Prostate gland (tissue), 2 donors: ENCODE measurements at regions of chr5 and their contacts with region 1.

Region 1: DNA sequence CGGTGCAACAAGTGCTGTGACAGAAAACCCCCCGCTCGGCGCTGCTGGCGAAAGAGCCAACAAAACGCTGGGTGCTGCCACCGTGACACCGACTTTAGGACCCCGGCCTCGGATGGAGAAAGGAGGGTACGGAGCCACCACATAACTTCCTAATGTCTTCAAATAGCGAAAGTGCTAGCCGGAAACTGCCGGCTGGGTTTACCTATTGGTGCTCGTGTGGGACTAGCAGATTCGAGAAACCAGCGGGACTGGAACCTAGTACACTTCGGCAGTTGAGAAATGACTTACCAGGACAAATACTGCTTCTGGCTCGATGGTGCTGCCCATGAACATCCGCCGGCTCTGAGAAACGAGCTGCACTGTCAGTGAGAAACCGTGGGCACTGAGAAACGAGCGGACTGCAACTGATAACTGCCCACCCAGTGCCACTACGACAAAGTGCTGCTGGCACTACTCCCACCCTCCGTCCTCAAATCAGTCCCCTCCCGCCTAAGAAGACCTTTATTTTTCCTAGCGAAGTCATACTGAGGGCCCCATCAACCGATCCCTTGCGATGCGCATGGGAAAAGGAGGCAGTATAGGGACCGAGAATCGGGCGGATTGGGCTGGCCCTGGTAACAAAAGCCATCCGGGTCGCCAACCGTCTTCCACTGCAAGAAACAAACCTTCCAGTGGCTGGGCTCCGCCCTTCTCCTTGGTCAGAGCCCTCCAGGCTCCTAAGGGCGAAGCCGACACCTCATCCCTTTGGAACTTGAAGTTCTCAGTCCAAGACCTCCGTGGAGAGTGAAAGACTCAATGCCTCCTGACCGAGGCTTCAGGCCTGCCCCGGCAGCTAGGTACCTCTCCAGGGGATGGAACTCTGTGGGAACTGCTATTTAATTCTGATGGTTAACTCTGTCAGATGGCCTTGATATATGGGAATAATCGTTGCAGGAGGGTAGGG is 27.0 kb upstream of the ANXA2R start:
- DNase-seq: peak; percentile 92
- H3K4me3 ChIP-seq: peak overlapping the region; percentile 62 to 77
- H3K27ac ChIP-seq: peak overlapping the region; percentile 98 to 99
- H3K4me1 ChIP-seq: peaks cover 5% of the 10 kb centered on the region
- H3K27me3 ChIP-seq: no peaks in the 10 kb centered on the region
- CTCF ChIP-seq: peak in 1 of 4 experiments; percentile 12
- POLR2A ChIP-seq: peak; percentile 60

Region 2: DNA sequence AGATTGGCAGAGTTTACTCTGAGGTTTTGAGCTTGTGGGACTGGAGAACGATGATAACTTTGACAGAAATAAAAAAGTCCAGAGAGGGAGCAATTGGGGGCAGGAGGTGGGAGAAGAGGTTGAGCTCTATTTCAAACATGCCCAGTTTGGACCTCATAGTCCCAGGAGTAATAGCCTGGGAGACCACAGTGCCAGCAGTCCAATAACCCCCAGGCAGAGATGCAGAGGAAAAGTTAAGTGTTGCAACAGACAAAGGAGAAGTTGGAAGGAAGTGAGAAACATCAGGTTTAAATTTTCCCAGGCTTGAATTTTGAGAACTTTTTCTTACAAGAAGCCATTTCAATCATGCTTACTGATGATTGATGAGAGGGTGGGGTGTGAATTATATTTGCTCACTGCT is 760.8 kb before region 1 on chr5:
- intact Hi-C with region 1: no loop called
- DNase-seq: no peak
- H3K4me3 ChIP-seq: no peak overlapping the region
- H3K27ac ChIP-seq: no peak overlapping the region
- H3K4me1 ChIP-seq: no peaks in the 10 kb centered on the region
- H3K27me3 ChIP-seq: no peaks in the 10 kb centered on the region
- CTCF ChIP-seq: no peak
- POLR2A ChIP-seq: no peak

Region 3: DNA sequence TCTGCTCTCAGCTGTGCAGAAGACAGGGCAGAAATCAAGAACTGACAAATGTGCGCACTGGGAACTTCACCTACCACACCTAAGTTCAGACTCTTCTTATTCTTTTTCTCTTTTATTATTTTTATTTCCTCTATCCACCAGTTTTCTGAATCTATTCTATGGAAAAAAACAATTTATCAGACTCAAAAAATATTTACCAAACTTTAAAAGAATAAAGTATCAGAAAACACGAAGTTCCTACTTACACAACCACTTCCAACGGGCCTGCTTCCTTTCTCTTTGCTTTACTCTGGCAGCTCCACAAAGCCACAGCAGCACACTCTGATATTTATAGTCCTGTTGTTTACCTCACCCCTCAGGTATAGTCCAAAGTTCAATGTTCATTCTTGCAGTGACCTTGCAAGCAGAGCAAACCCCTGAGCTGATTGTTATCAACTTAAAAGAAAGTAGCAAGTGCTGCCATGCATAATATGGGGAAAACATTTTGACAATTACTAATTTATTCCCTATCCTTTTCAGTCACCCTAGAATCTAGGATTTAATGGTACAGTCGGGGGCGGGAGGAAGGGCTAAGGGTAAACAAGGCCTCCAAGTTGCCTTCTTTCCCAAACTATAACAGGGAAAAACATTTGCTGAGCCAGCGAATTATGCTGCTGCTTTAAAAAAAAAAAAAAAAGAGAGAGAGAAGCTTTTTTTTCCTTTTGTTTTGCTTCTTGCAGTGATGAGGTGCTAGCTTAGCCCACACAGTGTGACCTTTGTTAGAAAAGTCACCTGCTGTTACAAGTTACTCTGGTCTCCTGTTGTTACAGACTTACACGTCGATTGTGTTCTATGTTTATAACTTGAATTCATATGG is 255.3 kb before region 1 on chr5 and contains the start of gene SELENOP:
- intact Hi-C with region 1: no loop called
- DNase-seq: peak; percentile 84
- H3K4me3 ChIP-seq: peak within 1 kb of the TSS; percentile 32 to 40
- H3K27ac ChIP-seq: peak within 1 kb of the TSS; percentile 82 to 83
- H3K4me1 ChIP-seq: peaks cover 10% of the 10 kb centered on the region
- H3K27me3 ChIP-seq: no peaks in the 10 kb centered on the region
- CTCF ChIP-seq: no peak
- POLR2A ChIP-seq: peak; percentile 71
- total RNA-seq, gene SELENOP: 228 to 503 TPM

Region 4: DNA sequence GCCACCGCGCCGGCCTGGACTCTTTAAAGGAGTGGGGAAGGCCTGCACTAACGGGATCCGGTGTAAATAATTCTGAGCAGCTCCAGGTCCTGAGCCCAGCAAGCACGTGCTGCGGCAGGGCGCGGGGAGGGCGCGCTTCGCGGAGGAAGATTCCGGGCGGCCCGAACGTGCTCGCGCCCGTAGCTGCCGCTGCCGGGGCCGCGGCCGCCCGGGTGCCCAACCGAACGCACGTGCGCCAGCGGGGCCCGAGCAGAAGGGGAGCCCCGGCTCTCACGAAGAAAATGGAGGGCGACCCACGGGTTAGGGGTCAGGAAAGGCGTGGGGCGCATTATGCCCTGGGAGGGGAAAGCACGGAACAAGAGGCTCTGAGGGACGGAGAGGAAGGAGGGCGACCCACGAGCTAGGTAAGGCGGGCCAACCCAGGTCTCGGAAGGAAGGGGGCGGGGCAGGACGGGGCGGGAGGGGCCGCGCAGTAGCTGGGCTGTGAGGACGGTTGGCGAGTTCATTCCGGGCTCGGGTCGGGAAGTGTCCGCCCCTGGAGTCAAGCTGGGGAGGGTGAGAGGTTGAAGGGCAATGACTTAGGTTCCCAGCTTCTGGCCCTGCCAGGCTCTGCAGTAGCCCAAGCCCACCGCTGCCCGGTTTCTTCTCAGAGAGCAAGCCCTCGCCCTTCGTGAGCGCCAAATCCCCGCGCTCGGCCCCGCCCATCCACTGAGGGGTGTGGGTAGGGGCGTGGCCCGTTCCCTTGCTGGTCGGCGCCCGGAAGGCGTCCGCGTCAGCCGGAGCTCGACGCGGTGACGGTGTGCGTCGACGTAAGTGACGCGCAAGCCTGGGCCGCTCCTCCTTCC is 53.9 kb after region 1 on chr5 and contains the start of gene ZNF131:
- intact Hi-C with region 1: loop called (anchors 5 kb)
- DNase-seq: peak; percentile 95
- H3K4me3 ChIP-seq: peak within 1 kb of the TSS; percentile 73 to 93
- H3K27ac ChIP-seq: peak within 1 kb of the TSS; percentile 99 to 100
- H3K4me1 ChIP-seq: no peaks in the 10 kb centered on the region
- H3K27me3 ChIP-seq: no peaks in the 10 kb centered on the region
- CTCF ChIP-seq: peak in 2 of 4 experiments; percentile 9 to 29
- POLR2A ChIP-seq: peak; percentile 68
- total RNA-seq, gene ZNF131: 33.9 to 40.3 TPM

Region 5: DNA sequence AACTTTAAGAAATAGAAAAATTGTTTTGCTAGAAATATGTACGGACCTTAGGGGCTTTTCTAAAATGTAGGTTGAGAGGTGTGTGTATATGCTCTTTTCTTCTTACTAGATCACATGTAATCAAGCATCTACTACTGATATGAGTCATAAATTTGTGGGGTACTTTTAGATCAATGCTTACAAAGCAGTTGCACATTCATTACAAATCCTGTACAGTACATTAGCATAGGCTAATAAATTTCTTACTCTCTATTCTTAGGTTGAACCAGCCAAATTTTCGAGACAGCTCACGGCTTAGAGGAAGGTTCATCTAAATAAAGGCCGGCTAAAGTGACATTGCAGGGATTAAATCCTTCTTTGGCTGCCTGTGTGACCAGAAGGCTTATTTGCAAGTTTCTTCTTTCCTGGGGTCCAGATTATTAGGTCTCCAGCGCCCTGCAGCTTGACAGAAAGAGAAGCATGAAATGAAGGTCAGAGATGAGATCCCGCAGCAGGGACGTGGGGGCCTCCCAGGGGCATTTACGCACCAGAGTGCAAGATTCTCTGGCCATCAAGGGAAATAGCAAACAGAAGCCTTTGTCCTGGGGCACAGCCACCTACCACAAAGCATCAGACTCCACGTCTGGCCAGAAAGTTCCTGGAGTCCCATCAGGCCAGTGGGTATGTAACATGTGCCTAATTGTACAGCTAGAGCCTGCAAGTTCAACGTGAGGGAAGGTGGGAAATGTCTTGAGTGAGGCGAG is 177.9 kb after region 1 on chr5:
- intact Hi-C with region 1: no loop called
- DNase-seq: no peak
- H3K4me3 ChIP-seq: no peak overlapping the region
- H3K27ac ChIP-seq: no peak overlapping the region
- H3K4me1 ChIP-seq: no peaks in the 10 kb centered on the region
- H3K27me3 ChIP-seq: no peaks in the 10 kb centered on the region
- CTCF ChIP-seq: no peak
- POLR2A ChIP-seq: no peak

Region 6: GRCh38 chr5:43530648-43531047 is 463.6 kb after region 1 on chr5:
- intact Hi-C with region 1: no loop called
- DNase-seq: no peak
- H3K4me3 ChIP-seq: no peak overlapping the region
- H3K27ac ChIP-seq: no peak overlapping the region
- H3K4me1 ChIP-seq: no peaks in the 10 kb centered on the region
- H3K27me3 ChIP-seq: no peaks in the 10 kb centered on the region
- CTCF ChIP-seq: no peak
- POLR2A ChIP-seq: no peak